ENCODE measurements at regions of chr7 and their contacts with region 1.

Region 1: DNA sequence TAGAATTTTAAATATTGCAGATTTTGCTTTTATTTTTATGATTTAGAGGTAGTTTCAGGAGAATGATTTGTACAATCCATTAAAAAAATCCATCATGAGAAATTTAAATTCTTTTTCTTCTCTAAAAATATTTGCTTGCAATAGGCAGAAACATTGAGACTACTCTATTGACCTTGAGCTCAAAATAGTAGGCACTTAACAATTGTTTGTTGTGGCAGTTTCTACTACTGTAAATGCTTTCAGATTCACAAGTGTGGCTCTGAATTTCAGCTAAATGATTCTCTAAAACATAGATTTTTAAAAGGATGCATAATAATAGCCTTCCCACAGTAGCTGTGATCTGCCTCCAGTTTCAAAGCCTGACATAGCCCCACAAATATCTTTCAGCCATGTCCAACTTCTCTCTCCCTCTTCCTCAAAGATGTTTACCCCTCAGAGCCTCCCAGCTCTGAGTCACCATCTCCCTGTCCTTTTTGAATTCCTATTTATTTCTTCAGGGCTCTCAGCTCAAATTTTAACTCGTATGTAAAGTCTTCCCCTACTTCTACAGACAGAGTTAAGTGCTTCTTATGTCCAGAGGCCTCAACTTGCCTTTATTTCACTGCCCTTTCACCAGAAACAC is 160.5 kb downstream of the AOAH start:
- DNase-seq: no peak
- ATAC-seq: no peak
- H3K4me3 ChIP-seq: no peak overlapping the region
- H3K4me3 Mint-ChIP-seq: no peak overlapping the region
- H3K27ac ChIP-seq: peak overlapping the region in 1 of 2 experiments; percentile 14
- H3K27ac Mint-ChIP-seq: peak overlapping the region; percentile 50
- H3K4me1 ChIP-seq: no peaks in the 10 kb centered on the region
- H3K4me1 Mint-ChIP-seq: peaks cover 3% of the 10 kb centered on the region
- H3K27me3 ChIP-seq: no peaks in the 10 kb centered on the region
- H3K27me3 Mint-ChIP-seq: no peaks in the 10 kb centered on the region
- CTCF ChIP-seq: no peak

Region 2: DNA sequence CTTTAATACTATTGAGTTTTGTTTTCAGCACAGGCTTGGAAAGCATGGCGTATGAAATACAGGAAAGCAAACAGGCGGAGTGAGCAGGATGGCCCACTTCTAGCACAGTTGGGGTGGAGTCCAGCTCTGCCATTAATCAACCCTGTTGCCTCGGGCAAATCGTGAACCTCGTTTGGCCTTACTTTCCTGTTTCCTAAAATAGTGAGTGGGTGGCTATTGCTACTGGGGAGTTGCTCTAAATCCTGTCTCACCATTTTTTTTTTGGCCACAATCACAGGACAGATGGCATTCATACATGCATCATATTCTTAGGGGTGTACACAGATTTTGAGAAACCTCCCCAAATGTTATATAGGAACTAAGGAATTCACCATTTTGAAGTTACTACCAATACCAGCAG is 16.4 kb before region 1 on chr7:
- CTCF ChIA-PET with region 1: no interaction called
- POLR2A ChIA-PET with region 1: no interaction called
- intact Hi-C with region 1: loop called in 1 of 2 experiments (anchors 1 kb)
- DNase-seq: no peak
- ATAC-seq: no peak
- H3K4me3 ChIP-seq: no peak overlapping the region
- H3K4me3 Mint-ChIP-seq: no peak overlapping the region
- H3K27ac ChIP-seq: no peak overlapping the region
- H3K27ac Mint-ChIP-seq: peak overlapping the region; percentile 55
- H3K4me1 ChIP-seq: no peaks in the 10 kb centered on the region
- H3K4me1 Mint-ChIP-seq: no peaks in the 10 kb centered on the region
- H3K27me3 ChIP-seq: no peaks in the 10 kb centered on the region
- H3K27me3 Mint-ChIP-seq: no peaks in the 10 kb centered on the region
- CTCF ChIP-seq: no peak

Region 3: DNA sequence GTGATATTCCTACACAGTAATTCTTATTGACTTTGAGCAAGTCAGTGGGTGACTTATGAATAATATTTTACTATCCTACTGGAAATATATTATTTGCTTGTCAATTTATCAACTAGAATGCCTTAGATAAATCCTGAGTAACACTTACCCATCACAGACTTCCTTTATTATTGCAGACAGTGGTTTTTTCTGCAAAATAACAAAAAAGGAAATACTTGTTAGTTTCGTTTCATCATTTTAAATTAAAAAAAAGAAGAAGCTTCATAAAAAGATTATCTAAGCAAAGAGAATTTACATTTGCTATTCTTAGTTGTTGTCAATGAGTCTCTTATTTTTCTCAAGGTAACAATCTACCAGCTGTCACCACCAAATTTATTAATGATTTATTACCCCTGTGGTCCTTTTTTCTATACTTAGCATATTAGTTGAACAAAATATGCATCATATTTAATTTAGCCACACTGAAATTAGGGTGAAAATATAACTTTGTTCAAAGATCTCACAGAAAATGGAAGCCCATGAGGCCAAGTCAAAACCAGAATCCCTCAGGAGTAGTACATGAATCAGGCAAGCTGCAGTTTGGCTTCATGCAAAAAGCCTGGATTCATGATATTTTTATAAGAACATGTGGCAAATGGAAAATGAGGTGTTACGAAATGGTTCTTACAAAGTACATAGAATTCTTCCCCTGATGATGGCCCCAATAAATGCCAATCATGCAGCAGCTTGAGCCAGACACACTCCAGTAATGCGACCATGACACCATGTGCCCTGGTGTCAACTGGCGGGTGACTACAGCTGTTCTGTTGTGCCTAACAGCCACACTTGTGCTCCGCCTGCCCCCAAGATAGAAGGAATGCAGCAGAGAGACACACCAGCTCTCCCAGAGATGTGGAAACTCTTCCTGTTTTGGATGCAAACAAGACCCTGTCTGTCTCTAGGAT is 752.2 kb after region 1 on chr7:
- CTCF ChIA-PET with region 1: no interaction called
- POLR2A ChIA-PET with region 1: no interaction called
- intact Hi-C with region 1: no loop called
- DNase-seq: no peak
- ATAC-seq: no peak
- H3K4me3 ChIP-seq: no peak overlapping the region
- H3K4me3 Mint-ChIP-seq: no peak overlapping the region
- H3K27ac ChIP-seq: no peak overlapping the region
- H3K27ac Mint-ChIP-seq: peak overlapping the region; percentile 45
- H3K4me1 ChIP-seq: peaks cover 46% of the 10 kb centered on the region
- H3K4me1 Mint-ChIP-seq: peaks cover 41% of the 10 kb centered on the region
- H3K27me3 ChIP-seq: no peaks in the 10 kb centered on the region
- H3K27me3 Mint-ChIP-seq: no peaks in the 10 kb centered on the region
- CTCF ChIP-seq: no peak

Measured in CD8-positive, alpha-beta T cell (primary cell).